A549 (cell line): ENCODE measurements at regions of chr18 and their contacts with region 1.

Region 1: DNA sequence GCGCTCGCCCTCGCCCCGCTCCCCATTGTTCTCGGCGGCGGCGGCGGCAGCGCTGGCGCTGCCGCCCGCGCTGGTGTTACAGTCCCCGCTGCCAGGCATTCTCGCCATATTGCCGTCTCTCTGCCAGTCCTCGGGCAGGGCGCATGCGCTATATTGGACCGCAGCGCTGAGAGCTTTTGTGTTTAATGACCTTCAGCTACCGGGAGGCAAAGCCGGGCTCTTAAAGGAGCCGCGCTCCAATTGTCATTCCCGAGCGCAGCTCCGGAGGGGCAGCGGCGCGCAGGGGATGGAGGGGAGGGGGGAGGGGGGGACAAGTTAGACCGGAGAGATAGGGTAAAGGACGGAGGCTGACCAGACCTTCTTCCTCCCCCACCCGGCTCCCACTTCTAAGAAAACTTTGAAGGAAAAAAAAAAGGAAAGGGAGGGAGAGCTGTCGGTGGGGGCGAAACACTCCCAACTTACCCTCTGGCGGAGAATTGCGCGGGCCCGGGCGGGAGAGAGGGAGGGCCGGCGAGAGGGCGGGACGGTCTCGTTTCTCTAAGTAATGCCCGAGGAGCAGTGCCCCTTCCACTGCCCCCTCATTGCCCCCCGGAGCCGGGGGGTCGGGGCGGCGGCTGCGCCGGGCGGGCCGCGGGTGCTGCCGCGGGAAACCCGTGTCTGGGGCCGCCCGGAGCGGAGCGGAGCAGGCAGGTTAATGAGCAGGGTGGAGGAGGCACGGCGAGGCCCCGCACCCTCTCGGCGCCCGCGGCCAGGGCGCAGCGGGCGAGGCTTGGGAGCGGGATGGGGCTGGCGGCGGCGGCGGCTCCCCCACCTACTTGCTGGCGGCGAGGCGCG is at the start of gene KCTD1:
- DNase-seq: peak; percentile 74 to 90
- ATAC-seq: peak; percentile 69 to 72
- H3K4me3 ChIP-seq: peak within 1 kb of the TSS; percentile 91
- H3K27ac ChIP-seq: peak within 1 kb of the TSS; percentile 99 to 100
- H3K4me1 ChIP-seq: peaks cover 18% of the 10 kb centered on the region; the same call in 2 of the 3 replicates
- CTCF ChIP-seq: no peak
- EP300 ChIP-seq: no peak
- POLR2A ChIP-seq: no peak
- RAD21 ChIP-seq: no peak; a peak in 1 of 5 replicates
- polyA plus RNA-seq, gene KCTD1: 21.1 and 26.1 TPM in 2 replicates

Region 2: DNA sequence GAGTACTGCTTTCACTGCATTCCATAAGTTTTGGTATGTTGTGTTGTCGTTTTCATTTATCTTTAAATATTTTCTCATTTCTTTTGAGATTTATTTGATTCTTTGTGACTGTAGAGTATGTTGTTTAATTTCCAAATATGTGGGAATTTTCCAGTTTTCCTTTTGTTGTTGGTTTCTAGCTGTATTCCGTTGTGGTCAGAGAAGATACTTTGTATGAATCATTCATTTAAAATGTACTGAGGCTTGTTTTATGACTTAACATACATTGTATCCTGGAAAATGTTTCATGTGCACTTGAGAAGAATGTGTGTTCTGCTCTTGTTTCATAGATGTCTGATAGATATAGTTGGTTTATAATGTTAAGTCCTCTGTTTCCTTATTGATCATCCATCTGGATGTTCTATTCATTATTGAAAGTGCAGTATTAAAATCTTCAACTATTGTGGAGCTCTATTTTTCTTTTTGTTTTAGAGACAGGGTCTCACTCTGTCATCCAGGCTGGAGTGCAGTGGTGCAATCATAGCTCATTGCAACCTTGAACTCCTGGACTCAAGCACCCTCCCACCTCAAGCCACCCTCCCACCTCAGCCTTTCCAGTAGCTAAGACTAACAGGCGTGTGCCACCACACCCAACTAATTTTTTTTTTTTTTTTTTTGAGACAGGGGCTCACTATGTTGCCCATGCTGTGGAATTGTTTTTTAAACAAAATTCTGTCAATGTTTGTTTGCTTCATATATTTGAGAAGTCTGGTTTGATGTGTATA is 225.6 kb before region 1 on chr18:
- CTCF ChIA-PET with region 1: no interaction called
- POLR2A ChIA-PET with region 1: no interaction called
- DNase-seq: no peak
- ATAC-seq: no peak
- H3K4me3 ChIP-seq: no peak overlapping the region
- H3K27ac ChIP-seq: no peak overlapping the region
- H3K4me1 ChIP-seq: no peaks in the 10 kb centered on the region
- CTCF ChIP-seq: no peak
- EP300 ChIP-seq: no peak
- POLR2A ChIP-seq: no peak
- RAD21 ChIP-seq: no peak

Region 3: DNA sequence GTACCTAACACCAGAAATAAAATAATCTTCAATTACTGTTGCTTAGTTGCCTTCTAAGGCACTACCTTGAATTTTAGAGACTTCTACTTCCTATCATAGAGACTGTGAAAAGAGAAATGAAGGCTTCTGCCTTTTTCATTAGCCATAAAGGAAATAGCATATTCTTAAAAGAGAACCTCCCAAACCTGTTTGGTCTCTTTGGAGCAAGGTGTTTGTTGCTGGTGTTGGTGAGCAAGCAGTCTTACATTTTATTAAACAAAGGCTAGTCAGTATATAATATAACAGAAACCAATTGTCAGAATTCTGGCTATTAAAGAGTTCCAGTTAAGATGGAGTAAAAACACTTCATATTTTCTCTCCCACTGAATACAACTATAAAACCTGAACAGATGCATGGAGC is 206.0 kb before region 1 on chr18:
- CTCF ChIA-PET with region 1: no interaction called
- POLR2A ChIA-PET with region 1: no interaction called
- DNase-seq: no peak
- ATAC-seq: no peak
- H3K4me3 ChIP-seq: no peak overlapping the region
- H3K27ac ChIP-seq: no peak overlapping the region
- H3K4me1 ChIP-seq: no peaks in the 10 kb centered on the region
- CTCF ChIP-seq: no peak
- EP300 ChIP-seq: no peak
- POLR2A ChIP-seq: no peak
- RAD21 ChIP-seq: no peak

Region 4: DNA sequence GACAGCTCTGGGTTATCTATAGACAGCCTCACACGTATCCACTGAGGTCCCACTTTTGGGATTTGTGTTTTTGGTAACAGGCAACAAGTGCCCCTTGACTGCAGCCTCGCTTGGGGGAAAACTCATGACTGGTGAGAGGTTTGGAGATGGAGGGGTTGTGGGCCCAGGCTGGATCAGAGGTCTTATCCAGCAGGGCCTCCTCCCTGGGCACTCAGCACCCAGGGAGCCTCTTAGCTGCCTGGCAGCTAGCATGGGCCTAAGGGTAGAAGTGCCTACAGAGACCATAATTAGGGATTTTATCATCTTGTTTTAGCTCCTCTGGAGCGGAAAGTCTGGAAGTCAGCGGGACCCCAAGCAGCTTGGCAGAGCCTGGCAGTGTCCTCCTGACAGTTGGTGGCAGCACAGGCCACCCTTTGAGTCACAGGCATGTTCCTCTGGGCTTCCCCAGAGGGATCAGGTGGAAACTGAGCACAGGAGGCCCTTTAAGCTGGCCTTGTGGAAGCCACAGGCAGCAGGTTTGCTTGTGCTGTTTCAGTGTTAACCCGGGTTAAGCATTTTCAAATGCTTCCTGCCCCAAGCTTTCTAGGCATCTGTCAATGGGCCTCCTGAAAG is 143.3 kb before region 1 on chr18:
- CTCF ChIA-PET with region 1: interaction called, 11 read pairs
- POLR2A ChIA-PET with region 1: no interaction called
- DNase-seq: peak; percentile 32 to 68
- ATAC-seq: peak; percentile 90 to 95
- H3K4me3 ChIP-seq: no peak overlapping the region
- H3K27ac ChIP-seq: peak overlapping the region; percentile 70 to 79
- H3K4me1 ChIP-seq: peaks cover 8% of the 10 kb centered on the region; the same call in 2 of the 3 replicates
- CTCF ChIP-seq: peak; percentile 59
- EP300 ChIP-seq: no peak
- POLR2A ChIP-seq: no peak
- RAD21 ChIP-seq: peak; percentile 85 to 87

Region 5: GRCh38 chr18:26429535-26430226 is 119.0 kb before region 1 on chr18:
- CTCF ChIA-PET with region 1: no interaction called
- POLR2A ChIA-PET with region 1: no interaction called
- DNase-seq: peak; percentile 66 to 68
- ATAC-seq: peak; percentile 98 to 99
- H3K4me3 ChIP-seq: no peak overlapping the region
- H3K27ac ChIP-seq: peak overlapping the region; percentile 61 to 76
- H3K4me1 ChIP-seq: peaks cover 13% of the 10 kb centered on the region
- CTCF ChIP-seq: no peak
- EP300 ChIP-seq: no peak
- POLR2A ChIP-seq: no peak
- RAD21 ChIP-seq: no peak

Region 6: DNA sequence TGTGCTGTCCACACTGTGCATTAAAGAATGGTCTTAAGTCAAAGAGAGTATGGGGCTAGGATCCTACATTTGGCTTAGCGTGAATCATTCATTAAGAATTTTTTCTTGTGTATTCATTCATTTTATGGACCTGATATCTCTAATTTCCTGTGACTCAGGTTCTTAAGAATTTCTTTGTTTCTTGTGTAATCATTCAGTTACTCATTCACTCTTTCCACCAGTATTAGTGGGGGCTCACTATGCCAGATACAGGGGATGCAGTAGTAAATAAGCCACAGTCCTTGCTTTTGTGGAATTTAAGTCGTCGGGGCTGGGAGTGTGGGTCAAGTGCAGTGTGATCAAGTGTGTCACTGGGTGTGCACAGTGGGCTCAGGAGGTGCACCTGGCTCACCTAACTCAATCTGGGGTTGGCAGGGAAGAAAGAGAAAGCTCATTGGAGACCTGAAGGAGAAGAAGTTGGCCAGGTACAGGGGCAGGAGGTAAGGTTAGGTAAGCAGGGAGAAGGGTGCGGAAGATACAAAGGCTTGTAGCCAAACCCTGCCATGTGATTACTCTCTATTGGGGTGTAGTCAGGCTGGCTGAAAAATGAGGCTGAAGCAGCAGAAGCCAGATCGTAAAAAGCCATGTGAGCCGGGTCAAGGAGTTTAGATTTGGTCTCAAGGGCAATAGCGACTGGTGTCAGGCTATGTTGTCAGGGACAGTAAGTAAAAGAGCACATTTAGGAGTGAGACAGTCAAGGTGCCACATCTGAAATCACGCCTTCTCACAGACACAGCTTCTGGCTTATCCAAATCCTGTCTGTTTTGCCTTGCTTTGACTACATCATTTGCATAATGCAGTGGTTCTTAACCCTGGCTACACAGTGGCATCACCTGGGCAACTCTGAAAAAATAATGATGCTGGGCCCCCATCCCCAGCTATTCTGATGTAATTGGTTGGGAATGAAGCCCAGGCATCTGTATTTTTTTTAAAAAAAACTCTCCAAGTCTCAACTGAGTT is 67.5 kb before region 1 on chr18:
- CTCF ChIA-PET with region 1: interaction called, 9 read pairs
- POLR2A ChIA-PET with region 1: interaction called, 11 read pairs
- DNase-seq: peak; percentile 68 to 95
- ATAC-seq: peak; percentile 79 to 85
- H3K4me3 ChIP-seq: no peak overlapping the region
- H3K27ac ChIP-seq: peak overlapping the region; percentile 97 to 98
- H3K4me1 ChIP-seq: peaks cover 93% of the 10 kb centered on the region
- CTCF ChIP-seq: no peak
- EP300 ChIP-seq: peak; percentile 88 to 90; a peak in 4 of 5 replicates
- POLR2A ChIP-seq: no peak
- RAD21 ChIP-seq: peak; percentile 44 to 50; a peak in 4 of 5 replicates

Region 7: DNA sequence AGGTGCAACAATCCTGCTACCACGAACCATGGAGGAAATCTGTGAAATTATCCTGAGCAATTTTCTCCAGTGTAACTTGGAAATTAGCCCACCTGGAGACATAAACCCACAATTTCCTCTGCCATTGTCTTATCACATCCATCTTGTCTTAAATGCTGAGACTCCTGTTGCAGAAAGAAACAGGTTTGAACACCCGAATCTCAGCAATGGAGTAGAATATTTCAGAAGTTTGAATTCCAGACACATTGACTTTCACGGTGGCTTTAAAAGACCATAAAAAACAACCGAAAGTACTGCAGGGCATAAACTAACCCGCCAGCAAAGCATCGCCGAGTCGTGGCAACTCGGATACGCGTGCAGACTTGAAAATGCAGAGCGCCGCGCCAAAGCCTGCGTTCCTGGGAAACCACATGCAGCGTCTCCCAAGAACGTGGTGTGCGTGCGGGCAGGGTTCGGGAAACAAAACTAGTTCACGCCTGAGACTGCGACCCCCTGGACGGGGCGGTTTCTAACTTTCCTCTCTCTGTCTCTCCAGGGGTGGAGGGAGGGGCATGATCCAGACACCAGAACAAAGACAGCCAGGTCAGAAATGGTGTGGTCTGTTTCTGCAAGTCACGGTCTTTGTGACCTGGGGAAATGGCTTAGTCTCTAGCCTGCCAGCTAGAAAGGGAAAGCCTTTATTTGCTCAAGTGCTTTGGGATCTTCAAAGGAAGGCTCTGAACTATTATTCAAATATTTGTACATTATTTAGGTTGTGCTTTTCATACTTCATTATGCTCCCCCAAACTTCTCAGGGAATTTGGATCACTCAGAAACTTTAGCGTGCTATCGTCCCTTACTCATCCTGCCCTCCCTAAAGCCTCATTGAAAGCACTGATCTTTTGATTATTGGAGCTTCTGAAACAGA is 26.6 kb after region 1 on chr18:
- CTCF ChIA-PET with region 1: interaction called, 6 read pairs
- POLR2A ChIA-PET with region 1: interaction called, 16 read pairs
- DNase-seq: peak; percentile 64 to 96
- ATAC-seq: peak; percentile 86 to 90
- H3K4me3 ChIP-seq: peak overlapping the region; percentile 37
- H3K27ac ChIP-seq: peak overlapping the region; percentile 82 to 89
- H3K4me1 ChIP-seq: peaks cover 43% of the 10 kb centered on the region
- CTCF ChIP-seq: no peak
- EP300 ChIP-seq: peak; percentile 69 to 90; a peak in 4 of 5 replicates
- POLR2A ChIP-seq: peak; percentile 25
- RAD21 ChIP-seq: peak in 1 of 2 experiments; percentile 8; a peak in 1 of 5 replicates

Region 8: DNA sequence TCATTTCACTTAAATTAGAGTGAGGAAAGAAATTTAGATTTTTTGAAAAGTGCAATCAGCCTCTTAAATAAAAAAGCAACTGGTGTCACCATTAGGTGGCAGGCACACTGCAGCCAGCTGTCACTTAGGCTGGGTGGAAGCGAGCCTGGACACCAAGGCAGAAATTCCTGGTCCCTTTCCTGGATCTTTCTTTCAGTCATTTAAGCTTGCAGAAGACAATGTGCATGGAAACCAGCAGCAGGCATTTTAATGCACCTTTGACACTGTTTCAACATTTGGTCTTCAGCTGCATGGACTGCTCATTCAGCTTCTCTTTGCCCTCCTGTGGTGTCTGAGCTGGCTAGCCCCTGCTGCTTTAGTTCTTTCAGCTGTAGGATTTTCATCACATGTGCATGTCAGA is 255.9 kb after region 1 on chr18:
- CTCF ChIA-PET with region 1: no interaction called
- POLR2A ChIA-PET with region 1: no interaction called
- DNase-seq: peak in 1 of 2 experiments; percentile 10
- ATAC-seq: peak in 1 of 2 experiments; percentile 38; a peak in 1 of 6 replicates
- H3K4me3 ChIP-seq: no peak overlapping the region
- H3K27ac ChIP-seq: no peak overlapping the region
- H3K4me1 ChIP-seq: peaks cover 9% of the 10 kb centered on the region; the same call in 1 of the 3 replicates
- CTCF ChIP-seq: peak; percentile 26; the same call in 1 of the 3 replicates
- EP300 ChIP-seq: no peak
- POLR2A ChIP-seq: no peak
- RAD21 ChIP-seq: peak in 1 of 2 experiments; percentile 45; a peak in 3 of 5 replicates